ENCODE measurements at regions of chr11 and their contacts with region 1.

Region 1: DNA sequence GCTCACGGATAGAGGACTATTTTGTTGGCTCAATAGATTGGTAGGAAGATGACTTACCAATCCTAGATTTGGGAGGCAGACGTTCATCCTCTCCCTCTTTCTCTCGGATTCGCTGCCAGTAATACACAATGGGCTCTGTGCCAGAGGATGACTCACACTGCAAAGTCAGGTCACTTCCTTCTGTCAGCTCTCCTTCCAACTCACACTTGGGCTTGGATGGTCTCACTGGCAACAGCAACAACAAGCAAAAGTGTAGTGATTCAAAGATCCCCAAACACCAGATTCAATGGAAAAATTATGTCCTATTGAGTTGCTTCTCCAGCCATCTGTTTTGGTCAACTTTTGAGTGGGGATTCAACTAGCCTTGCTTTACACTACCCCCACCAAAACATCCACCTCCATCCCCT is 21.7 kb upstream of the HSPA8 start:
- DNase-seq: peak; percentile 82
- H3K4me3 Mint-ChIP-seq: peak overlapping the region; percentile 59
- H3K27ac Mint-ChIP-seq: peak overlapping the region; percentile 76
- H3K4me1 Mint-ChIP-seq: peaks cover 57% of the 10 kb centered on the region
- H3K27me3 Mint-ChIP-seq: no peaks in the 10 kb centered on the region

Region 2: GRCh38 chr11:123069908-123070821 is 13.5 kb before region 1 on chr11:
- CTCF ChIA-PET with region 1: interaction called, 16 read pairs
- POLR2A ChIA-PET with region 1: interaction called, 391 read pairs
- DNase-seq: no peak
- H3K4me3 Mint-ChIP-seq: peak overlapping the region; percentile 79
- H3K27ac Mint-ChIP-seq: peak overlapping the region; percentile 99
- H3K4me1 Mint-ChIP-seq: peaks cover 61% of the 10 kb centered on the region
- H3K27me3 Mint-ChIP-seq: no peaks in the 10 kb centered on the region